B cell (primary cell): ENCODE measurements at regions of chr1 and their contacts with region 1.

Region 1: DNA sequence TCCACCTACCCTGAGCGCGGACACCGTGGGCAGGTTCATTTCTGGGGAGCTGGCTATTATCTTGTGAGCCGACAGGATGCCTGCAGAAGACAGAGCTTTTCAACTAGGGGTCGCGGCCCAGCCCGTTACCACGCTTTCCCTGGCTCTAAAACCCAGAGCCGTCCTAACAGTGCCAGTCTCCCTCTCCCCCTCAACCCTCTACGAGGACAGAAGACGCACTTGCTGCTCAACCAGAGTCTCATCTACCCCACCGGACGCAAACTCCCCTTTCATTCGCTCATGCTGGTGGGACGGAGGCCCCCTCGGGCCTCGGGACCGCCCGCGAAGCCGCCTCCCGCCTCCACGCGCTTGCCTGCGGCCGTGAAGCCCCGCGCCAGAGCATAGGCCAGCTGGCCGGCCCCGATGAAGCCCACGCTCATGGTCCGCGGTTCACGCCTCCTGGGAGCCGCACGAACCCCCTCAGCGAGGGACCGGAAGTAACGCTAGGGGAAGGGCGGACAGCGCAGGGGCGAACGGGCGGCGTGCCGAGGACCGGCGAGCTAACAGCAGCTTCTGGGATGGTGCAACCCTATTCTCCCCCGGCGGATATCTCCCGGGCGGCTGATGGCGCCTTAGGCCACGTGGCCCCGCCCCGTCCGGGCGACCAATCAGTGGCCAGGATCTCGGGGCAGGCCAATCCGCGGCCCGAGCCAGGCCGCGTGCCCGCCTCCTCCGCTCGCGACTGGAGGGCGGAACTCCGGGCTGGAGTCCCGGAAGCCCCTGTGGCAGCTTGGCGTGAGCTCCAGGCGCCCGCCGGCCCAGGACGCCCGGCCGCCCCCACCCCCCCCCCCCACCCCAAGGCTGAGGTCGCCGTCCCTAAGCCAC is at the start of gene PYCR2:
- DNase-seq: peak; percentile 97
- ATAC-seq: peak; percentile 99
- H3K4me3 ChIP-seq: peak within 1 kb of the TSS; percentile 72 to 99 (median 86)
- H3K4me3 Mint-ChIP-seq: peak within 1 kb of the TSS; percentile 97
- H3K27ac ChIP-seq: peak within 1 kb of the TSS; percentile 81 to 91
- H3K27ac Mint-ChIP-seq: peak within 1 kb of the TSS; percentile 92
- H3K4me1 ChIP-seq: peaks cover 16 to 26% of the 10 kb centered on the region in 2 donors
- H3K4me1 Mint-ChIP-seq: peaks cover 21% of the 10 kb centered on the region
- H3K27me3 ChIP-seq: no peaks in the 10 kb centered on the region
- H3K27me3 Mint-ChIP-seq: no peaks in the 10 kb centered on the region
- CTCF ChIP-seq: no peak
- total RNA-seq, gene PYCR2: 107 and 113 TPM in 2 replicates

Region 2: GRCh38 chr1:224565186-224565585 is 1358.7 kb before region 1 on chr1:
- CTCF ChIA-PET with region 1: no interaction called
- POLR2A ChIA-PET with region 1: no interaction called
- intact Hi-C with region 1: no loop called
- DNase-seq: no peak
- ATAC-seq: no peak
- H3K4me3 ChIP-seq: no peak overlapping the region
- H3K4me3 Mint-ChIP-seq: no peak overlapping the region
- H3K27ac ChIP-seq: no peak overlapping the region
- H3K27ac Mint-ChIP-seq: no peak overlapping the region
- H3K4me1 ChIP-seq: no peaks in the 10 kb centered on the region
- H3K4me1 Mint-ChIP-seq: no peaks in the 10 kb centered on the region
- H3K27me3 ChIP-seq: no peaks in the 10 kb centered on the region
- H3K27me3 Mint-ChIP-seq: no peaks in the 10 kb centered on the region
- CTCF ChIP-seq: no peak

Region 3: GRCh38 chr1:225467193-225468020 is 456.5 kb before region 1 on chr1:
- CTCF ChIA-PET with region 1: no interaction called
- POLR2A ChIA-PET with region 1: interaction called, 3 read pairs
- intact Hi-C with region 1: loop called (anchors 1 kb)
- DNase-seq: peak; percentile 92
- ATAC-seq: peak; percentile 88
- H3K4me3 ChIP-seq: peak overlapping the region; percentile 68 to 83 (median 73)
- H3K4me3 Mint-ChIP-seq: peak overlapping the region; percentile 91
- H3K27ac ChIP-seq: peak overlapping the region; percentile 82 to 97
- H3K27ac Mint-ChIP-seq: peak overlapping the region; percentile 97
- H3K4me1 ChIP-seq: peaks cover 15 to 34% of the 10 kb centered on the region in 2 donors
- H3K4me1 Mint-ChIP-seq: peaks cover 37% of the 10 kb centered on the region
- H3K27me3 ChIP-seq: no peaks in the 10 kb centered on the region
- H3K27me3 Mint-ChIP-seq: no peaks in the 10 kb centered on the region
- CTCF ChIP-seq: no peak

Region 4: GRCh38 chr1:225767634-225768540 is 156.0 kb before region 1 on chr1:
- CTCF ChIA-PET with region 1: no interaction called
- POLR2A ChIA-PET with region 1: no interaction called
- intact Hi-C with region 1: no loop called
- DNase-seq: no peak
- ATAC-seq: no peak
- H3K4me3 ChIP-seq: no peak overlapping the region
- H3K4me3 Mint-ChIP-seq: no peak overlapping the region
- H3K27ac ChIP-seq: no peak overlapping the region
- H3K27ac Mint-ChIP-seq: no peak overlapping the region
- H3K4me1 ChIP-seq: peaks cover 5 to 8% of the 10 kb centered on the region in 2 donors
- H3K4me1 Mint-ChIP-seq: peaks cover 12% of the 10 kb centered on the region
- H3K27me3 ChIP-seq: no peaks in the 10 kb centered on the region
- H3K27me3 Mint-ChIP-seq: peaks cover 3% of the 10 kb centered on the region
- CTCF ChIP-seq: no peak

Region 5: DNA sequence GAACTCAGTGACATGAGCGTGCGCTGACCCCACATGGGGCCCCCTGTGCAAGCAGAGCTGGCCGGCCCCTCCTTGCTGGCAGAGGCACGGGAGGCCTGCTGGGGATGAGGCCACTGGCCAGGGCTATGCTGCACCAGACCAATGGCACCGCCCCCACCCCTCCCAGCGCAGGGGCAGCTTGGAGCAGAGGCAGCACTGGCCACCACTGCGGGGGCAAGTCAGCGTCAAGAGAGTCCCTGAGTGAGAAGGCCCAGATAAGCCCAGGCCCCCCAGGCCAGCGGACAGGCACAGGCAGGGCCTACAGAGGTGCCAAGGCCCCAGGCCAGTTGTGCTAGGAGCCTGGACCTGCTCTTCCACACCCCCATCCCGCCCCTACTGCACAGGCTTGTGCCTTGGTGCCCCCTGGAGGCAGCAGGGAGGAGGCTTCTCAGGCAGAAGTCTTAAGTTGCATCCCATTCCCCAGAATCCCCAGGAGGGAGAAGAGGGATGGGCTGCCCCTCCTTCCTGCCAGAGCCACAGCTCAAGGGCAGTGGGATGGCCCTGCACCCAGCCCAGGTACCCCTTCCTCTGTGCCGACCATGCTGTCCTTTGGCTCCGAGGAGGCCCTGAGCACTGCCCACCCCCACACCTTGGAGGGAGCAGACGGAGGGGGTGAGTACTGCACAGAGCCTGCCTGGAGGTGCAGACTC is 78.2 kb before region 1 on chr1:
- CTCF ChIA-PET with region 1: no interaction called
- POLR2A ChIA-PET with region 1: no interaction called
- intact Hi-C with region 1: loop called (anchors 2 kb)
- DNase-seq: no peak
- ATAC-seq: no peak
- H3K4me3 ChIP-seq: no peak overlapping the region
- H3K4me3 Mint-ChIP-seq: no peak overlapping the region
- H3K27ac ChIP-seq: peak overlapping the region in 1 of 2 donors; percentile 87
- H3K27ac Mint-ChIP-seq: peak overlapping the region; percentile 98
- H3K4me1 ChIP-seq: peaks cover 41 to 47% of the 10 kb centered on the region in 2 donors
- H3K4me1 Mint-ChIP-seq: peaks cover 47% of the 10 kb centered on the region
- H3K27me3 ChIP-seq: no peaks in the 10 kb centered on the region
- H3K27me3 Mint-ChIP-seq: no peaks in the 10 kb centered on the region
- CTCF ChIP-seq: no peak

Region 6: GRCh38 chr1:225881969-225882693 is 41.8 kb before region 1 on chr1 and contains the start of gene TMEM63A:
- CTCF ChIA-PET with region 1: interaction called, 7 read pairs
- POLR2A ChIA-PET with region 1: interaction called, 20 read pairs
- intact Hi-C with region 1: loop called (anchors 5 kb)
- DNase-seq: peak; percentile 91
- ATAC-seq: peak; percentile 78
- H3K4me3 ChIP-seq: peak within 1 kb of the TSS; percentile 86 to 99 (median 96)
- H3K4me3 Mint-ChIP-seq: peak within 1 kb of the TSS; percentile 96
- H3K27ac ChIP-seq: peak within 1 kb of the TSS; percentile 51 to 74
- H3K27ac Mint-ChIP-seq: peak within 1 kb of the TSS; percentile 91
- H3K4me1 ChIP-seq: peaks cover 30 to 42% of the 10 kb centered on the region in 2 donors
- H3K4me1 Mint-ChIP-seq: peaks cover 48% of the 10 kb centered on the region
- H3K27me3 ChIP-seq: no peaks in the 10 kb centered on the region
- H3K27me3 Mint-ChIP-seq: no peaks in the 10 kb centered on the region
- CTCF ChIP-seq: peak; percentile 23
- total RNA-seq, gene TMEM63A: 238 and 267 TPM in 2 replicates

Region 7: DNA sequence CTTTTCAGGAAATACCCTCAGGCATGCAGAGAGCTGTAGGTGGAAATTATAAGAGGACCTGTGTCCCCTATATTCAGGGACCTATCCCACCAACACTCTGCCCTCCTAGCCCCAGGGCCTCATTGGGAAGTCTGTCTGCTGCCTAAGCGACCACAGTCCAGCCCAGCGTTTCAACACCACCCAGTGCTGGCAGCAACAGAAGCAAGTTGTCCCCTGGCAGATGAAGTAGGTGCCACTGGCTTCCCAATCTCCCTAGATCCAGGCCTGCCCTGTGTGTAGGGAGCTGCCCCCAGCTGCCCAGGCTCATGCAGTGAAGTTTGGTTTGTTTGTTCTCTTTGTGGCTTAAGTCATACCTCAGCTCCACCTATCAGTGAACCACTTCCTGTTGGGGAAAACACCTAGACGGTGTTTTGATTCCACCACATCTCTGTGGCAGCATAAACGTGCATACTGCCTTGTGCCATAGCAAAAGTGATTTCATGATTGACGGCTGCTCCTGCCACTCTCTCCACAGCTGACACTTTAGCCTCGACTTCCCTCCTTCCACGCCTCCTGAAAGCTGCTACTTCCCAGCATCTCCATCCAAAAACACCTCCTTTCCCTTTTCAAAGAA is 26.9 kb before region 1 on chr1:
- CTCF ChIA-PET with region 1: interaction called, 8 read pairs
- POLR2A ChIA-PET with region 1: interaction called, 11 read pairs
- intact Hi-C with region 1: loop called (anchors 1 kb)
- DNase-seq: peak; percentile 89
- ATAC-seq: peak; percentile 98
- H3K4me3 ChIP-seq: peak overlapping the region in 1 of 5 experiments; percentile 26
- H3K4me3 Mint-ChIP-seq: peak overlapping the region; percentile 71
- H3K27ac ChIP-seq: peak overlapping the region; percentile 86 to 97
- H3K27ac Mint-ChIP-seq: peak overlapping the region; percentile 98
- H3K4me1 ChIP-seq: peaks cover 34 to 36% of the 10 kb centered on the region in 2 donors
- H3K4me1 Mint-ChIP-seq: peaks cover 36% of the 10 kb centered on the region
- H3K27me3 ChIP-seq: no peaks in the 10 kb centered on the region
- H3K27me3 Mint-ChIP-seq: no peaks in the 10 kb centered on the region
- CTCF ChIP-seq: no peak

Region 8: GRCh38 chr1:225934711-225935110 is 10.8 kb after region 1 on chr1:
- CTCF ChIA-PET with region 1: no interaction called
- POLR2A ChIA-PET with region 1: no interaction called
- intact Hi-C with region 1: no loop called
- DNase-seq: no peak
- ATAC-seq: no peak
- H3K4me3 ChIP-seq: no peak overlapping the region
- H3K4me3 Mint-ChIP-seq: no peak overlapping the region
- H3K27ac ChIP-seq: no peak overlapping the region
- H3K27ac Mint-ChIP-seq: no peak overlapping the region
- H3K4me1 ChIP-seq: no peaks in the 10 kb centered on the region
- H3K4me1 Mint-ChIP-seq: no peaks in the 10 kb centered on the region
- H3K27me3 ChIP-seq: no peaks in the 10 kb centered on the region
- H3K27me3 Mint-ChIP-seq: no peaks in the 10 kb centered on the region
- CTCF ChIP-seq: no peak

Region 9: DNA sequence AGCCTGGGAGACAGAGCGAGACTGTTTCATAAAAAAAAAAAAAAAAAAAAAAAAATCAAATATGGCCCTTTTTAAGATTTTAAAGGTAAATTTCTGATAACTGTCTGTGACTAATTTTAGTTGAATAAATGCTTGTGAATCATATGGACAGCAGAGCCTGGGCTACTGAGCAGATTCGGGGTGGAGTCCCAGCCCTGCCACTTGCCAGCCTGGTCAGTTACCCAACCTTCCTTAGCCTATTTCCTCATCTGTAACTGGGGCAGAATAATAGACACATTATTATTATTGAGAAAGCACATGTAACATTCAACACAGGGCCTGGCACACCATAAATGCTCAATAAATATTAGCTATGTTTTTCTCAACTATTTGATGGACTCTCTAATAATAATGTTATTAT is 127.4 kb after region 1 on chr1:
- CTCF ChIA-PET with region 1: no interaction called
- POLR2A ChIA-PET with region 1: interaction called, 12 read pairs
- intact Hi-C with region 1: no loop called
- DNase-seq: no peak
- ATAC-seq: no peak
- H3K4me3 ChIP-seq: no peak overlapping the region
- H3K4me3 Mint-ChIP-seq: no peak overlapping the region
- H3K27ac ChIP-seq: no peak overlapping the region
- H3K27ac Mint-ChIP-seq: no peak overlapping the region
- H3K4me1 ChIP-seq: no peaks in the 10 kb centered on the region
- H3K4me1 Mint-ChIP-seq: no peaks in the 10 kb centered on the region
- H3K27me3 ChIP-seq: no peaks in the 10 kb centered on the region
- H3K27me3 Mint-ChIP-seq: no peaks in the 10 kb centered on the region
- CTCF ChIP-seq: no peak

Region 10: DNA sequence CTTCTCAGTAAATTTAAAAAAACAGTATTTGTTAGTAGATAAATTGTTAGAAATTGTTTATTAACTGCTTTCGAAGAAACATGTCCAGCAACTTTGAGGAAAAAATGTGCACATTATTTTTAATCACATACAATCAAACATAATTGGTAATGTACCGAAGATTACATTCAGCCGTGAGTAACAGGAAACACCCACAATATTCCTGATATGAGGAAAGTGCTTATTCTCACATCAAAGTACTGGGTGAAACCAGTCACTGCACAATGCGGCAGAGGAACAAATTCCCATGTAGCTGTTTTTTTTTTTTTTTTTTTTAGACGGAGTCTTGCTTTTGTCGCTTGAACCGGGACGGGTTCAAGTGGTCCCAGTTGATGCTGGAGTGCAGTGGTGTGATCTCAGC is 252.9 kb after region 1 on chr1:
- CTCF ChIA-PET with region 1: no interaction called
- POLR2A ChIA-PET with region 1: no interaction called
- intact Hi-C with region 1: no loop called
- DNase-seq: no peak
- ATAC-seq: no peak
- H3K4me3 ChIP-seq: no peak overlapping the region
- H3K4me3 Mint-ChIP-seq: no peak overlapping the region
- H3K27ac ChIP-seq: no peak overlapping the region
- H3K27ac Mint-ChIP-seq: no peak overlapping the region
- H3K4me1 ChIP-seq: peaks cover 10 to 19% of the 10 kb centered on the region in 2 donors
- H3K4me1 Mint-ChIP-seq: peaks cover 59% of the 10 kb centered on the region
- H3K27me3 ChIP-seq: no peaks in the 10 kb centered on the region
- H3K27me3 Mint-ChIP-seq: no peaks in the 10 kb centered on the region
- CTCF ChIP-seq: no peak